ENCODE measurements at regions of chr3 and their contacts with region 1.

Region 1: GRCh38 chr3:9915254-9916141 is 1.4 kb upstream of the IL17RC start:
- DNase-seq: peak; percentile 80
- H3K4me3 Mint-ChIP-seq: peak overlapping the region; percentile 77
- H3K27ac Mint-ChIP-seq: peak overlapping the region; percentile 71
- H3K4me1 Mint-ChIP-seq: peaks cover 14% of the 10 kb centered on the region
- H3K27me3 Mint-ChIP-seq: peaks cover 2% of the 10 kb centered on the region

Region 2: GRCh38 chr3:9902372-9903237 is 12.9 kb before region 1 on chr3 and contains the start of gene IL17RE:
- intact Hi-C with region 1: loop called (anchors 2 kb)
- DNase-seq: no peak
- H3K4me3 Mint-ChIP-seq: peak within 1 kb of the TSS; percentile 71
- H3K27ac Mint-ChIP-seq: peak within 1 kb of the TSS; percentile 80
- H3K4me1 Mint-ChIP-seq: peaks cover 30% of the 10 kb centered on the region
- H3K27me3 Mint-ChIP-seq: no peaks in the 10 kb centered on the region
- total RNA-seq, gene IL17RE: 1.1 TPM in 2 replicates

Region 3: DNA sequence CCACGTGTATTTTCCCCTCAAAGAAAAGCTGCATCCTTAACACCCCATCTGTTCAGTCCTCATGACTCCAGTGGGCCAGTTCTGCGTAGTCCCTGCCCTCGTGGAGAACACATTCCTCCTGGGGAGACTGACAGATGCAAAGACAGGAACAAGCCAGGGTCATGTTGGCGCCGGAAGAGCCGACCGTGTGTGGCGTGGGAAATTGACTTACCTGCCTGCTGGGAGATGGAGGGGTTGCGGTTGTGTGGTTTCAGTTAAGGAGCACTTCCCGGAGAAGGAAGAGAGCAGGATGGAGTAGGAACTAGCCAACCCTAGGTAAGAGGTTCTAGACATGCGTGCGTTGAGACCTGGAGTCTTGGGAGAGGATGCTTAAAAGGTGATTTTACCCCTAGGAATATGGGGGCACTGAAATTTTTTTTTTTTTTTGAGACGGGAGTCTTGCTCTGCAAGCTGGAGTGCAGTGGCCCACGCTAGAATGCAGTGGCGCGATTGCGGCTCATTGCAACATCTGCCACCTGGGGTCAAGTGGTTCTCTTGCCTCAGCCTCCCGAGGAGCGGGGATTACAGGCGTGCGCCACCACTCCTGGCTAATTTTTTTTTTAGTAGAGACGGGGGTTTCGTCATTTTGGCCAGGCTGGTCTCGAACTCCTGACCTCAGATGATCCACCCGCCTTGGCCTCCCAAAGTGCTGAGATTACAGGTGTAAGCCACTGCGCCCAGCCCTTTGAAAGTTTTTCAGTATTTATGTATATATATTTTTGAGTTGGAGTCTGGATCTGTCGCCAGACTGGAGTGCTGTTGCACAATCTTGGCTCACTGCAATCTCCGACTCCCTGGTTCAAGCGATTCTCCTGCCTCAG is 227.4 kb after region 1 on chr3:
- intact Hi-C with region 1: no loop called
- DNase-seq: peak; percentile 72
- H3K4me3 Mint-ChIP-seq: peak overlapping the region; percentile 96
- H3K27ac Mint-ChIP-seq: peak overlapping the region; percentile 88
- H3K4me1 Mint-ChIP-seq: peaks cover 26% of the 10 kb centered on the region
- H3K27me3 Mint-ChIP-seq: no peaks in the 10 kb centered on the region